ENCODE measurements at regions of chr12 and their contacts with region 1.

Region 1: DNA sequence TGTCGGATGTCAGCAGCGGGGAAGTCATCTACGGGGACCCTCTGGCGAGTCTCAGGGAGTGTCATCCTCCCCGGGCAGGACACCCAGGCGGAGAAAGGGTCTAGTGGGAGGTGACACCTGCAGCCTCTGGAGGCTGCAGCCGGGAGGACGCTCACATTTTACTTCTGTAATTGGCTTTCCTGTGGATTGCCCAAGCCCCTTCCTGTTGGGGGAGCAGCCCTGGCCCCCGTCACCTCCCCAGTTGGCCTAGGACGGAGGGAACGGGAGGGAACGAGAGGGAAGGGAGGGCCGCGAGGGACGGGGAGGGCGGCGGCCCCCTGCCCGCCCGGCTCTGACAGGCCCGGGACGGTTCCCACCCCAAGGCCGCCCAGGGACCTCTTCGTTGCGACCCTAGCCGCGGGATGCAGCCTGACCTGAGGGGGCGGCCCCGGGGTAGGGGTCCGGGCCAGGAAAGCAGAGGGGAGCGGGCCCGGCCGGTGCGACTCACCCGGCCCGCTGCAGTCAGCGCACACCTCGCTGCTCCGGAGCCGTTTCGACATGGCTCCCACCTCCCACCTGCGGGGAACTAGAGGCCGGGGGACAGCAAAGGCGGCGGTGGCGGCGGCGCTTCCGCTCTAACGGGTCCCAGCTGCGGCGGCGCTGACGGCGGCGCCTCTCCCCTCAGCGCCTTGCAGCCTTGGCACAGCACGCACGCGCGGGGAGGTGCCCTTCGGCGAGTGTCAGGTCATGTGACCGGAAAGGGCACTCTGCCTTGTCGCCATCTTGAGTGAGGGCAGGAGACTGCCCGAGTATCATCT is at the start of gene GIT2:
- DNase-seq: peak; percentile 91
- ATAC-seq: peak; percentile 86
- H3K4me3 ChIP-seq: peak within 1 kb of the TSS; percentile 93 to 97 (median 94)
- H3K27ac ChIP-seq: peak within 1 kb of the TSS; percentile 75
- H3K4me1 ChIP-seq: peaks cover 57% of the 10 kb centered on the region
- H3K27me3 ChIP-seq: no peaks in the 10 kb centered on the region; a peak in 1 of 5 replicates
- CTCF ChIP-seq: no peak; the same call in 1 of the 2 replicates
- EP300 ChIP-seq: 0 out of 4 replicates have a peak, but pooled peaks have one; percentile 18 to 38
- POLR2A ChIP-seq: peak; percentile 59 to 86
- RAD21 ChIP-seq: peak; percentile 34; the same call in 1 of the 2 replicates
- total RNA-seq, gene GIT2: 15.2 and 18.4 TPM in 2 replicates

Region 2: GRCh38 chr12:109944561-109945359 is 51.1 kb before region 1 on chr12:
- CTCF ChIA-PET with region 1: no interaction called
- POLR2A ChIA-PET with region 1: interaction called, 4 read pairs
- in situ Hi-C with region 1: no loop called
- intact Hi-C with region 1: loop called (anchors 5 kb)
- DNase-seq: peak; percentile 58
- ATAC-seq: peak; percentile 74
- H3K4me3 ChIP-seq: no peak overlapping the region
- H3K27ac ChIP-seq: peak overlapping the region; percentile 46
- H3K4me1 ChIP-seq: peaks cover 66% of the 10 kb centered on the region
- H3K27me3 ChIP-seq: no peaks in the 10 kb centered on the region
- CTCF ChIP-seq: peak; percentile 50
- EP300 ChIP-seq: no peak
- POLR2A ChIP-seq: no peak
- RAD21 ChIP-seq: no peak

Region 3: DNA sequence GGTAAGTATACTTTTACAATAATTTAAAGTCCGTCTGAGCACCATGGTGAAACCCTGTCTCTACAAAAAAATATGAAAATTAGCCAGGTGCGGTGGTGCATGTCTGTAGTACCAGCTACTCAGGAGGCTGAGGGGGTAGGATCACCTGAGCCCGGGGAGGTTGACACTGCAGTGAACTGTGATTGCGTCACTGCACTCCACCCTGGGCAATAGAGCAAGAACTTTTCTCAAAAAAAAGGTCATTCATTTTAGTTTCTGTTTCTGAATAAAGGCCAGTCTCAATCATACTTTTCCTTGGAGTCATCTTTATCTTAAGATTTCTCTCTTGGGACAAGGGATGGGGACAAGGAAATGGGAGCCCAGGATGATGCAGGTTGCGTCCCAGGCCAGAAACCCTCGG is 16.3 kb after region 1 on chr12:
- CTCF ChIA-PET with region 1: no interaction called
- POLR2A ChIA-PET with region 1: interaction called, 12 read pairs
- in situ Hi-C with region 1: no loop called
- intact Hi-C with region 1: no loop called
- DNase-seq: peak; percentile 37
- ATAC-seq: peak; percentile 56; the same call in 2 of the 3 replicates
- H3K4me3 ChIP-seq: peak overlapping the region in 1 of 3 experiments; percentile 5; a peak in 1 of 6 replicates
- H3K27ac ChIP-seq: peak overlapping the region; percentile 90
- H3K4me1 ChIP-seq: peaks cover 42% of the 10 kb centered on the region
- H3K27me3 ChIP-seq: no peaks in the 10 kb centered on the region
- CTCF ChIP-seq: no peak
- EP300 ChIP-seq: 0 out of 4 replicates have a peak, but pooled peaks of 1 of the 2 experiments have one; percentile 12
- POLR2A ChIP-seq: no peak
- RAD21 ChIP-seq: no peak

Region 4: DNA sequence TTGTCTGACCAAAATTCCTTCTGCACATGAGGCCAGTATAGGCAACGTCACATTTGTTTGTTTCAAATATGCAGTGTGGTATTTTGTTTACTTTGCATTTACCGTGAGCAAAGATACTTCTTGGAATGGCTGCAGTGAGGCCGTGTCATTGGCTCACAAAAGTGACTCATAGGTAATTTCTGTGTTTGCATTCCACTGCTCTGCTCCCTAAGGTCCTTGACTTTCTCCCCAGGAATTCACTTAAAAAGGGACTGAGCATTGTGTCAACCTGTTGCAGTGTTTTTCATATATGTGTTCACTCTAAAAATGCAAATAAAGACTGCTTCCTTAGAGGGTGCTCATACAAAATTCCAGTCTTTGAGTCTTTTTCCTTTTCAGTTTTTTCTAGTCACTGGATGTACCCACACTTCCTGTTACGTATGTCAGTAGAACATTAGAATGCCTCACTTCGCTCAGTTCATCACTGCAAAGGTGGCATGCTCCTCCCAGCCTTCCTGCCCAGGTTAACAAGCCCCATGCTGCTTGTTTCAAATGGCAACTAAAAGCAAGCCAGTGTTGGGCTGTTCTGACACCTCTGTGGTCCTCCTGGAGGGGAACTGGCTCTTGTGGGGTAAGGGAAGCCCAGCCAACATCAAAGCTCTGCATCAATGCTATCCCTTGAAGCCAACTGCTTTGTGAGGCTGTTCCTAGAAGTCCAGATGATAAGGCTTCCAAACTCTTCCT is 43.4 kb after region 1 on chr12:
- CTCF ChIA-PET with region 1: no interaction called
- POLR2A ChIA-PET with region 1: interaction called, 12 read pairs
- in situ Hi-C with region 1: no loop called
- intact Hi-C with region 1: loop called (anchors 1 kb)
- DNase-seq: peak; percentile 99
- ATAC-seq: peak; percentile 88
- H3K4me3 ChIP-seq: peak overlapping the region in 1 of 3 experiments; percentile 34; a peak in 1 of 6 replicates
- H3K27ac ChIP-seq: peak overlapping the region; percentile 96
- H3K4me1 ChIP-seq: peaks cover 95% of the 10 kb centered on the region
- H3K27me3 ChIP-seq: no peaks in the 10 kb centered on the region
- CTCF ChIP-seq: no peak
- EP300 ChIP-seq: peak; percentile 79 to 80; a peak in 2 of 4 replicates
- POLR2A ChIP-seq: peak in 1 of 2 experiments; percentile 44; a peak in 2 of 4 replicates
- RAD21 ChIP-seq: no peak

Region 5: DNA sequence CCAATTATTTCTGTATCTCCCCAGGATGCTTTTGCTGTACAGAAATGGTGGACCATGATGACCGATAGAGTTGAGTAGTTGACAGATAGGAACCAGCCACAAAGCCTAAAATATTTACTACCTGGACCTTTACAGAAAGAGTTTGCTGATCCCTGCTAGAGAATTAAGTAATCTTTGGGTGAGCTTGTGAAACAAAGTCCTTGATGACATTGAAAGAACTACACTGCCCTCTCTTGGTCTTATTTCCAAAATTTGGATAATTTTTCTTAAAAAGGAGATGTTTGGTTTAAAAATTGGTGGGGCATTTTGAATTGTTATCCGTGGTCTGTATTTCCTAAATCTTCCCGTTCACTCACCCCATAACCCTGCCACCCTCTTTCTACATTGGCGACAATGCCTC is 604.4 kb after region 1 on chr12:
- CTCF ChIA-PET with region 1: no interaction called
- POLR2A ChIA-PET with region 1: no interaction called
- in situ Hi-C with region 1: no loop called
- intact Hi-C with region 1: no loop called
- DNase-seq: peak; percentile 70
- ATAC-seq: no peak; the same call in 2 of the 3 replicates
- H3K4me3 ChIP-seq: no peak overlapping the region
- H3K27ac ChIP-seq: no peak overlapping the region
- H3K4me1 ChIP-seq: peaks cover 15% of the 10 kb centered on the region
- H3K27me3 ChIP-seq: no peaks in the 10 kb centered on the region
- CTCF ChIP-seq: peak; percentile 74
- EP300 ChIP-seq: no peak
- POLR2A ChIP-seq: no peak
- RAD21 ChIP-seq: peak; percentile 86

Measured in HepG2 (cell line).